ENCODE measurements at regions of chr16 and their contacts with region 1.

Region 1: DNA sequence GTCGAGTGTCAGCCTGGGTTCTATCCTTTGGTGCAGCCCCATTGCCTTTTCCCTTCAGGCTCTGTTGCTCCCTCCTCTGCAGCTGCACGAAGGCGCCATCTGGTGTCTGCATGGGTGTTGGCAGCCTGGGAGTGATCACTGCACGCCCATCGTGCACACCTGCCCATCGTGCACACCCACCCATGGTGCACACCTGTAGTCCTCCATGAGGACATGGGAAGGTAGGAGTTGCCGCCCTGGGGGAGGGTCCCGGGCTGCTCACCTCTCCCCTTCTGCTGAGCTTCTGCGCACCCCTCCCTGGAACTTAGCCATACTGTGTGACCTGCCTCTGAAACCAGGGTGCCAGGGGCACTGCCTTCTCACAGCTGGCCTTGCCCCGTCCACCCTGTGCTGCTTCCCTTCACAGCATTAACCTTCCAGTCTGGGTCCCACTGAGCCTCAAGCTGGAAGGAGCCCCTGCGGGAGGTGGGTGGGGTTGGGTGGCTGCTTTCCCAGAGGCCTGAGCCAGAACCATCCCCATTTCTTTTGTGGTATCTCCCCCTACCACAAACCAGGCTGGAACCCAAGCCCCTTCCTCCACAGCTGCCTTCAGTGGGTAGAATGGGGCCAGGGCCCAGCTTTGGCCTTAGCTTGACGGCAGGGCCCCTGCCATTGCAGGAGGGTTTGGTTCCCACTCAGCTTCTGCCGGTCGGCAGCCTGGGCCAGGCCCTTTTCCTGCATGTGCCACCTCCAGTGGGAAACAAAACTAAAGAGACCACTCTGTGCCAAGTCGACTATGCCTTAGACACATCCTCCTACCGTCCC is 2.9 kb downstream of the CTRL start:
- DNase-seq: peak in 1 of 2 donors; percentile 92
- H3K4me3 ChIP-seq: no peak overlapping the region
- CTCF ChIP-seq: peak in 1 of 3 donors; percentile 85
- POLR2A ChIP-seq: no peak

Region 2: DNA sequence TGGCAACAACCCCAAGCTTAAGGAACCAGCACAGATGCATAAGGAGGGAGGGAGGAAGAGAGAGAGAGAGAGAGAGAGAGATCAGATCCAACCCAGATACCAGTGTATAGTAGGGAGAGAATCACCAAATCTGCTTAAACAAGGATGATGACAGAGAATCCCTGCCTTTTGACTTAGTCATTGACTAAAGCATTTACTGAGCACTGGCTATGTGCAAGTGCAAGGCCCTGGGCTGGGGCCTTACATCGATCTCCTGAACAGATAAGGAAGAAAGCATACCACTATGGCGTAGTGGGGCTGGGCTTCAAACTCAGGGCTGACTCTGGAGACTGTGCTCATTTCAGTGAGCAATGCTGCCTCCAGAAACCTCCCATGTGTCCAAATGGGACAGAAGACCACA is 106.3 kb before region 1 on chr16:
- intact Hi-C with region 1: loop called (anchors 10 kb)
- DNase-seq: no peak
- H3K4me3 ChIP-seq: no peak overlapping the region
- CTCF ChIP-seq: no peak
- POLR2A ChIP-seq: no peak

Region 3: GRCh38 chr16:67883872-67884261 is 44.9 kb before region 1 on chr16:
- intact Hi-C with region 1: loop called (anchors 5 kb)
- DNase-seq: peak in 1 of 2 donors; percentile 87
- H3K4me3 ChIP-seq: no peak overlapping the region
- CTCF ChIP-seq: peak in 1 of 3 donors; percentile 8
- POLR2A ChIP-seq: no peak

Region 4: GRCh38 chr16:67987460-67988160 is 58.8 kb after region 1 on chr16:
- intact Hi-C with region 1: no loop called
- DNase-seq: no peak
- H3K4me3 ChIP-seq: no peak overlapping the region
- CTCF ChIP-seq: no peak
- POLR2A ChIP-seq: no peak

Measured in lower leg skin (tissue), 4 donors.